ENCODE measurements at regions of chr3 and their contacts with region 1.

Region 1: GRCh38 chr3:105868742-105869530 is at the start of gene CBLB:
- DNase-seq: peak; percentile 97
- H3K4me3 ChIP-seq: peak within 1 kb of the TSS; percentile 94 to 97 (median 97)
- H3K27ac ChIP-seq: peak within 1 kb of the TSS; percentile 95
- H3K4me1 ChIP-seq: peaks cover 13% of the 10 kb centered on the region
- H3K27me3 ChIP-seq: no peaks in the 10 kb centered on the region
- CTCF ChIP-seq: no peak
- total RNA-seq, gene CBLB: 39.3 to 59.4 TPM

Region 2: GRCh38 chr3:105933871-105934270 is 64.9 kb after region 1 on chr3:
- CTCF ChIA-PET with region 1: no interaction called
- dilution Hi-C with region 1: no loop called
- in situ Hi-C with region 1: no loop called
- intact Hi-C with region 1: no loop called
- DNase-seq: no peak
- H3K4me3 ChIP-seq: no peak overlapping the region
- H3K27ac ChIP-seq: no peak overlapping the region
- H3K4me1 ChIP-seq: peaks cover 5% of the 10 kb centered on the region
- H3K27me3 ChIP-seq: no peaks in the 10 kb centered on the region
- CTCF ChIP-seq: no peak

Region 3: GRCh38 chr3:105944721-105945120 is 75.8 kb after region 1 on chr3:
- CTCF ChIA-PET with region 1: no interaction called
- dilution Hi-C with region 1: no loop called
- in situ Hi-C with region 1: no loop called
- intact Hi-C with region 1: loop called (anchors 1 kb)
- DNase-seq: peak; percentile 94
- H3K4me3 ChIP-seq: peak overlapping the region in 1 of 3 experiments; percentile 6
- H3K27ac ChIP-seq: peak overlapping the region; percentile 96
- H3K4me1 ChIP-seq: peaks cover 12% of the 10 kb centered on the region
- H3K27me3 ChIP-seq: no peaks in the 10 kb centered on the region
- CTCF ChIP-seq: no peak

Region 4: GRCh38 chr3:106013971-106014370 is 145.0 kb after region 1 on chr3:
- CTCF ChIA-PET with region 1: no interaction called
- dilution Hi-C with region 1: no loop called
- in situ Hi-C with region 1: no loop called
- intact Hi-C with region 1: loop called (anchors 5 kb)
- DNase-seq: peak; percentile 96
- H3K4me3 ChIP-seq: no peak overlapping the region
- H3K27ac ChIP-seq: peak overlapping the region; percentile 71
- H3K4me1 ChIP-seq: peaks cover 11% of the 10 kb centered on the region
- H3K27me3 ChIP-seq: no peaks in the 10 kb centered on the region
- CTCF ChIP-seq: no peak

Region 5: DNA sequence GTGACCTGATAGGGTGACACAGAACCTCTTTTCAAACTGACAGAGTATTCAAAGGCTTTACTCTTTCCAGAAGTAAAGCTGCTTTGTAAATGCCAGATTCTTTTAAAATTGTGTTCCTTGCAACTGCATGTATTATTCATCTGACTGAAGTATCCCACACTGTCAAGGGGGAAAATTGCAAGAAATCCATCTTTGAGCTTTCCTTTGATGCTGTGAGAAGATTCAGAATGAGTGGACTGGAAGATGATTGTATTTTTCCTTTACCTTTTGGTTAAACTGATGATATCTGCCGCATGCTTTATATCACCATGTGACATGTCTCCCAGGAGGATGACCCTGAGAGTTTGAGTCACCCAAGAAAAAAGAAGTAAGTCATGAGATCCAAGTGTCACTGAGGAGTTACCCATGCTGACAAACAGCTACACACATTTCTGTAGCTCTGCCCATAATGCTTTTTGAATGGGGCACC is 250.7 kb after region 1 on chr3:
- CTCF ChIA-PET with region 1: no interaction called
- dilution Hi-C with region 1: no loop called
- in situ Hi-C with region 1: no loop called
- intact Hi-C with region 1: loop called (anchors 2 kb)
- DNase-seq: peak; percentile 11
- H3K4me3 ChIP-seq: no peak overlapping the region
- H3K27ac ChIP-seq: no peak overlapping the region
- H3K4me1 ChIP-seq: peaks cover 16% of the 10 kb centered on the region
- H3K27me3 ChIP-seq: no peaks in the 10 kb centered on the region
- CTCF ChIP-seq: no peak

Region 6: DNA sequence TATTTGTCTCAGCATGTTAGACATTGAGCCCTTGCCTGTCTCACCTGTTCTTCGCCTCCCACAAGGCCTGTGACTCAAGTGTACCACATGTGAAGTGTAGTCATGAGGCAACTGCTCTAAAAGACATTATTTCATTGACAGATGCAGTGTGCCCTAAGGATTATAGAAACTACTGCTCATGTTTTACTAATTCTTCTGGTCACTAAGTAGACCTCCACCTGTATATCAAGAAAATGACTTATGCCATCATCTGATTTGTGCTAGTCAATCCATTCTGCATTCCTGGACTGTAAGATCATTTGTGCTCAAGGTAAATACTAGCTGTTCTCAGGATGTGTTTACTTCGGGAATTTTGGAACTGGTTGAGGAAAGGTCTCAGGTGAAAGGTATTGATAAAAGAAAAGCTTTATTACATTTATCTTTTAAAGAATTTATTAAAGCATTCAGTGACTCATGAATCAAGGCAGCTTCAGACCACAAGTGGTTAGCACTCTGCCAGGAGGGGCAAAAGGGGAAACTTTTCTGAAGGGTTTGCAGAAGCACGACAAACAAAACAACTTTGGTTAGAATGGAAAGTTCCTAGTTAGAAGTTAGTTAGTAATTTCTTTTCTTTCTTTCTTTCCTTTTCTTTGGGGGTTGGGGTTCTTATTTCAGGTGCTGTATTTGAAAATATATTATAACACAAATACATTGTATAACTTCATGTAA is 465.1 kb after region 1 on chr3:
- CTCF ChIA-PET with region 1: no interaction called
- dilution Hi-C with region 1: no loop called
- in situ Hi-C with region 1: no loop called
- intact Hi-C with region 1: loop called (anchors 10 kb)
- DNase-seq: peak; percentile 94
- H3K4me3 ChIP-seq: no peak overlapping the region
- H3K27ac ChIP-seq: peak overlapping the region; percentile 29
- H3K4me1 ChIP-seq: peaks cover 14% of the 10 kb centered on the region
- H3K27me3 ChIP-seq: no peaks in the 10 kb centered on the region
- CTCF ChIP-seq: no peak

Region 7: GRCh38 chr3:107064445-107065060 is 1195.6 kb after region 1 on chr3:
- CTCF ChIA-PET with region 1: no interaction called
- dilution Hi-C with region 1: no loop called
- in situ Hi-C with region 1: no loop called
- intact Hi-C with region 1: loop called (anchors 5 kb)
- DNase-seq: peak; percentile 62
- H3K4me3 ChIP-seq: no peak overlapping the region
- H3K27ac ChIP-seq: no peak overlapping the region
- H3K4me1 ChIP-seq: peaks cover 32% of the 10 kb centered on the region
- H3K27me3 ChIP-seq: no peaks in the 10 kb centered on the region
- CTCF ChIP-seq: peak; percentile 81 to 84

Measured in mammary epithelial cell (primary cell).